ENCODE measurements at regions of chr5 and their contacts with region 1.

Region 1: DNA sequence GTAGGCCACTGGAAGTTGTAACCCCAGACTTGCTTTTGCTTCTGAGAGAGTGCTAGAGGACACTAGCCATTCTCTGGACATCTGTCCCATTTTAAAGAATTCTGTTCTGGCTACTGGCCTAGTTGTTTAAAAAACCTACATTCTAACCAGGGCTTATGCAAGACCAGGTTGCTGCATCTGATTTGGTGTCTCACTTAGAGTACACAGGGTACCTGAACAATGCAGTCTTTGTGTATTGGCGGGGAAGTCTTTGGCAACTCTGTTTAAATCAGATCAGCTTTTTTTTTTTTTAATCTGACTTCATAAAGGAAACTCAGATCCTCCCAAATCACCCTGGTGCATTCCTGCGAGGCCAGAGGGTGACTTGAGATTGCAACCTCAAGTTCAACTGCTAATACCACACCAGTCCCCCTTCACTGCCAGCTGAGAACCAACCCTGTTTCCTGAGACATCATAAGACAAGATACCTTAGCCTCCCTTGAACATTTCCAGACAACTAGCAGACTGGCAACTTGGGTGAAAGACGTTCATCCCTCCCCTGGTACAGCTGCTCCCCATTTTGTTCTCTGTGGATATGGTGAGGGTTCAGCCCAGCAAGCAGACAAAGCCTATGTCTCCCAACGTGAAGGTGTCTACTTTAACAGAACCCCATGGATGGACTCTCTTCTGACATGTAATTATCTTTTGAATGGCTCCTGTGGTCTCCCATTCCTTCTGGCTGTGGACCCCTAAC is 27.0 kb downstream of the SKP1 start:
- DNase-seq: no peak

Region 2: DNA sequence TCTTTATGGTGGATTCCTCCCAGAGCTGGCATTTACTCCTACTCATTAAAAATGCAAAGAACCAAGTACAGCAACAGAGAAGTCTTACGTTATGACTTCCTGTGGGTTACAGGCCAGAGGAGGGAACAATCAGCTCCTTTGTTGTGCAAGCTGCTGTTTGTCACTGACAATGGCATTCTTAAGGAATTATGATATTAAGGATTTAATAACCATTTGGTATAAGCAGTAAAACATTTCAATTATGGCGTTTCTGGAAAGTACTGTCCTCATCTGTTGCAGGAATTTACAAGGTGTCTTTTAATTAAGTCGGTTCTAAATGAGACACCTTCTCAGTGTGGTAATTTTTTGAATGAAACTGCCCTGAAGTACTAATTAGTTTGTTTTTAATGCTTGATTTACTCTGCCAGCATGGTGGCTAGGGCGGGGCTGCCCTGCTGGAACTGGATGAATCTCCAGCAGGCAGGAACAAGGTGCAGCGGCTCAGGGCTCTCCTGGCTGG is 95.8 kb before region 1 on chr5:
- in situ Hi-C with region 1: no loop called
- DNase-seq: no peak

Region 3: GRCh38 chr5:134070725-134071613 is 78.8 kb before region 1 on chr5:
- in situ Hi-C with region 1: loop called (anchors 5 kb)
- DNase-seq: no peak

Region 4: GRCh38 chr5:134111741-134112647 is 37.7 kb before region 1 on chr5:
- in situ Hi-C with region 1: no loop called
- DNase-seq: no peak